PC-9 (cell line): ENCODE measurements at regions of chr2 and their contacts with region 1.

Region 1: DNA sequence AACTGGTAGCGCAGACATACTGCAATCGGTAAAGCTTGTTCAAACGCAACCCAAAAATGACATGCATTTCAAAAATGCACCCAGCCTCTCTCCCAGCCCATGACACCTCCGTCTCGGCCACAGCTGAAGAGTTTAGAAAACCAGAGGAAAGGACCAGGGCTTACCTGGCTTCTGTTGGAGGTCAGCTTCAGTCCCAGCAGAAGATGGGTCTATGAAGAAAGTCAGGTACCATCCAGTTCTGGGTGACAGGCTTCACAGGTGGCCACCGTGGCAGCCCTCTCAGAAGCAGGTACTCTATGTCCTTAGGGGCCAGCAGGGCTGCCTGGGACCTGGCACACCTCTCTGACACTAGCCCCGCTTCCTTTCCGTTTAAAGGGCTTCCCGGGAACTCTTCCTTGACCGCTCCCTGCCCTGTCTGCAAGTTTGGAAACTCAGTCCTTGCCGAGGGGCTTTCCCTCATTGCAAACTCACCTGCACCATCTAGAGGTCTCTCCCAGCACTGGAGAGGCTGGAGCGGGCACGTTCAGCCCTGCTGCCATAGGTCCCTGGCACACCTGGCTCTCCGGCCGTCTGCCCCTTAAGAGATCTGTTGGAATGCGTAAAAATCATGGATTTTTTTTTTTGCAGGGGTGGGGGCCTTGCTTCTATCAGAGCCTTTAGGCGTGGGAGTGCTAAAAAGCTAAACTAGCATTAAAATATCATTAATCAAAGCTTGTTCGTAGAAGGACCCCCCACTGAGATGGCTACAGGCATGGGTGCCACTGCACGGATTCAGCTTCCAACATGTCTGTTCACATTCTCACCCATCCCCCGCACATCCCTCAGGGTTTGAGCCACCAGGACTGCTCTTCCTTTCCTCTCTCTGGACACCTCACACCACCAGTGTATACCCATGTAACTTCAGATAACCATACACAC is at the start of gene EDAR:
- DNase-seq: peak; percentile 52 to 67
- H3K4me3 ChIP-seq: 0 out of 2 replicates have a peak within 1 kb of the TSS, but pooled peaks have one; percentile 6
- H3K27ac ChIP-seq: no peak within 1 kb of the TSS
- H3K4me1 ChIP-seq: peaks cover 4% of the 10 kb centered on the region; the same call in 1 of the 2 replicates
- H3K27me3 ChIP-seq: peaks cover 13% of the 10 kb centered on the region
- CTCF ChIP-seq: peak; percentile 57
- total RNA-seq, gene EDAR: not detected in 2 replicates

Region 2: DNA sequence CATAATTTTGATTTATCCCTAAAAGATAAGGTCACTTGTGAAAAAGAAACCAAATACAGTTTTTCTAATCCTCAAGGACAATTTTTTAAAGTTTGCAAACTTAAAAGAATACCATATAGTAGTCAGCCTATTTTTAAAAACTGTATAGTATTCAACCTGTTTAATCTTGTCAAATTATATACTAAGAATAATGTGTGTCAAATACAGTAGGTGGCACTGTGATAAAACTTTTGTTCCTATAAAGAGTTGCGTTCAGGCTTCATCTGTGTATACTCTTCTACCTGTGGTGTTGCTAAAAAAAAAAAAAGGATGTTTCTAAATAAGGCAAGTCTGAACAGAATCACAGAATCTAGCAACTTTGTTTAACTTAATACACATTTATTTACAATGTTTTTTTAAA is 133.9 kb before region 1 on chr2:
- CTCF ChIA-PET with region 1: no interaction called
- POLR2A ChIA-PET with region 1: no interaction called
- intact Hi-C with region 1: loop called (anchors 1 kb)
- DNase-seq: no peak
- H3K4me3 ChIP-seq: no peak overlapping the region
- H3K27ac ChIP-seq: no peak overlapping the region
- H3K4me1 ChIP-seq: no peaks in the 10 kb centered on the region
- H3K27me3 ChIP-seq: no peaks in the 10 kb centered on the region
- CTCF ChIP-seq: peak; percentile 63

Region 3: GRCh38 chr2:108938077-108938710 is 50.9 kb before region 1 on chr2:
- CTCF ChIA-PET with region 1: no interaction called
- POLR2A ChIA-PET with region 1: no interaction called
- intact Hi-C with region 1: no loop called
- DNase-seq: peak in 1 of 2 experiments; percentile 28
- H3K4me3 ChIP-seq: no peak overlapping the region
- H3K27ac ChIP-seq: no peak overlapping the region
- H3K4me1 ChIP-seq: no peaks in the 10 kb centered on the region
- H3K27me3 ChIP-seq: peaks cover 3% of the 10 kb centered on the region
- CTCF ChIP-seq: no peak

Region 4: DNA sequence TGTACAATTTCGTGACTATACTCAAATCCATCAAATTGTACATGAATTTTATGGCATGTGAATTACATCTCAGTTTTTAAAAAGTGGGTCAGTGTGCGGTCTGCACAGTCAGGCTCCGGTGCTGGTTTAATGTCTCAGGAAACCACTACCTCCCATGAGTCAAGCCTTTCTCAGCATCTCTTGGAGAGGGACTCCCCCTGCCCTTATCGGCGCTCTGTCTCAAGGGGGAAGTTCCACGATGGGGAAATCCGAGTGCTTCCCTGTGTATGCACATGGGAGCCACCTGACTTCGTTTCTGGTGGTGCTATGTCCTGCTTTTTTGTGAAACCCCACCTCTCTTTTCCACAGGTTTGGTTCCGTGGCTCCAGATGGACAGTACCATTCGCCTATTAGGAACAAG is 1815.9 kb after region 1 on chr2:
- CTCF ChIA-PET with region 1: no interaction called
- POLR2A ChIA-PET with region 1: no interaction called
- intact Hi-C with region 1: no loop called
- DNase-seq: no peak
- H3K4me3 ChIP-seq: no peak overlapping the region
- H3K27ac ChIP-seq: no peak overlapping the region
- H3K4me1 ChIP-seq: no peaks in the 10 kb centered on the region
- H3K27me3 ChIP-seq: no peaks in the 10 kb centered on the region
- CTCF ChIP-seq: no peak